ENCODE measurements at regions of chr12 and their contacts with region 1.

Region 1: GRCh38 chr12:106945261-106945851 is 10.4 kb upstream of the TMEM263 start:
- DNase-seq: no peak
- H3K4me3 ChIP-seq: no peak overlapping the region
- H3K27ac ChIP-seq: no peak overlapping the region
- H3K4me1 ChIP-seq: no peaks in the 10 kb centered on the region
- H3K27me3 ChIP-seq: no peaks in the 10 kb centered on the region
- CTCF ChIP-seq: no peak

Region 2: GRCh38 chr12:106223485-106224354 is 721.6 kb before region 1 on chr12:
- CTCF ChIA-PET with region 1: no interaction called
- POLR2A ChIA-PET with region 1: no interaction called
- intact Hi-C with region 1: no loop called
- DNase-seq: peak; percentile 69
- H3K4me3 ChIP-seq: no peak overlapping the region
- H3K27ac ChIP-seq: no peak overlapping the region
- H3K4me1 ChIP-seq: no peaks in the 10 kb centered on the region
- H3K27me3 ChIP-seq: peaks cover 9% of the 10 kb centered on the region
- CTCF ChIP-seq: peak; percentile 92

Region 3: DNA sequence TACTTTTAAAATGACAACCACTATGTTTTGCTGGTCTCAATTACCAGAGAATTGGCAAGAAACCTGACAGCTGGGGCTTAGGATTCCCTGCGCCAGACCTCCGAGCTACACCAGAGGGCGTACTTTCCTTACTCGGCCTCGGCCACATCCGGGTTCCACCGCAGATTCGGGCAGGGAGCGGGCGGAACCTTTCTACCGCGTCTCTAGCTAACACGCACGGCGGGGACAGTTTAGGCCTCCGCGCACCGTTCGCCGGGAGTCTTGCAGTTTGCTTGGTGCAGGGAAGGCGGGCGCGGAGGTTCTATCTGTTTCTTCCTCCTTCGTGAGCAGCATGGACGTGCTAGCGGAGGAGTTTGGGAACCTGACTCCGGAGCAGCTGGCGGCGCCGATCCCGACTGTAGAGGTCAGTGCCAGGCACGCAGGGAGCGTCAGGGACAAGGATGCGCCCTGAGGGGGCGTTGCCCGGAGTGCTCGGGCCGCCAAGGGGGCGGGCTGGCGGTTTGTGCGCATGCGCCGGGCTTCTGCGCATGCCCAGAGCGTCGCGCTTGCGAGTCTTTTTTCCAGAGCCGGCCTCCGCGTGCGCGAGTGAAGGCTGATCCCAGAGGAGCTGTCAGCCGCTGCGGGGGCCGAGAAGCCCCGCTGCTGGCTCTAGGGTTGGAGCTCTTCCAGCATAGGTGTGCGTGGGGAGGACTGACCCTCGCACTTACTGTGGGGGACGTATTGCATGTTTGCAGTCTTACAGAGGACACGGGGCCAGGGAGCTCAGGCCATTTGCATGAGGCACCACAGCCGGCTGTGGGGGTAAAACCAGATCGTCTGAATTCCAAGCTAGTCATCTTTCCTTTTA is 587.6 kb before region 1 on chr12 and contains the start of gene POLR3B:
- CTCF ChIA-PET with region 1: interaction called, 14 read pairs
- POLR2A ChIA-PET with region 1: no interaction called
- intact Hi-C with region 1: no loop called
- DNase-seq: peak; percentile 97
- H3K4me3 ChIP-seq: peak within 1 kb of the TSS; percentile 70
- H3K27ac ChIP-seq: peak within 1 kb of the TSS; percentile 89
- H3K4me1 ChIP-seq: peaks cover 8% of the 10 kb centered on the region
- H3K27me3 ChIP-seq: no peaks in the 10 kb centered on the region
- CTCF ChIP-seq: peak; percentile 92
- total RNA-seq, gene POLR3B: 13.7 and 14.8 TPM in 2 replicates

Region 4: GRCh38 chr12:106897981-106898940 is 47.1 kb before region 1 on chr12:
- CTCF ChIA-PET with region 1: interaction called, 10 read pairs
- POLR2A ChIA-PET with region 1: no interaction called
- intact Hi-C with region 1: no loop called
- DNase-seq: peak; percentile 36
- H3K4me3 ChIP-seq: no peak overlapping the region
- H3K27ac ChIP-seq: no peak overlapping the region
- H3K4me1 ChIP-seq: peaks cover 3% of the 10 kb centered on the region
- H3K27me3 ChIP-seq: no peaks in the 10 kb centered on the region
- CTCF ChIP-seq: no peak